A673 (cell line): ENCODE measurements at regions of chr11 and their contacts with region 1.

Region 1: GRCh38 chr11:27158722-27159679 is 118.4 kb downstream of the BBOX1 start:
- DNase-seq: peak; percentile 94
- H3K4me3 ChIP-seq: no peak overlapping the region
- H3K27ac ChIP-seq: no peak overlapping the region
- H3K4me1 ChIP-seq: no peaks in the 10 kb centered on the region
- H3K27me3 ChIP-seq: peaks cover 3% of the 10 kb centered on the region
- CTCF ChIP-seq: peak; percentile 99

Region 2: DNA sequence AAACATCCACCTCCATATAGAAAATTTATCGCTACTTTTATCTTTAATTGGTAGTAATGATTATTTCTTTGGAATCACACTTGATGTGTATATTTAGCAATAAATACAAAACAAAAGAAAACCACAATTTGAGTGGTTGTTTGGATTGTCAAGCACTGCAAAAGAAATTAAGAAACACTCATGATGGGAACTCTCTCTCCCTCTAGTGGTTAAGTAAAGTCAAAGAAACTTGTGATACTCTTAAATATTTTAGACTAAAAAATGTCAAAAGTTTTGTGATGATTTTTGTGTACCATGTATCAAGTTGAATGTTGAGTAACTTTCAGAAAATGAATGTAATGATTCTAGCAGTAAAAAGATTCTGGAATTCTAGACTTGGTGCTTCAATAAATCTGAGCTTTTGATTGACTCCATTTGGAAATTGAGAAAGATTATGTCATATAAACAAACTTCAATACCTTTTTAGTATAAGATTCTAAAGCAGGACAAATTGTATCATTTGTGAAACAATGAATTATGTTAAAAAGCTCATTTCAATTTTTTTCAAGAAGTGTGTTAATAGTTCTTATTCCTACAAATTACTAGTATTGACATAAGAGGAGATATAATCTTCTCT is 607.7 kb before region 1 on chr11:
- CTCF ChIA-PET with region 1: interaction called, 3 read pairs
- POLR2A ChIA-PET with region 1: no interaction called
- intact Hi-C with region 1: loop called (anchors 2 kb)
- DNase-seq: peak; percentile 75
- H3K4me3 ChIP-seq: no peak overlapping the region
- H3K27ac ChIP-seq: no peak overlapping the region
- H3K4me1 ChIP-seq: no peaks in the 10 kb centered on the region
- H3K27me3 ChIP-seq: peaks cover 97% of the 10 kb centered on the region
- CTCF ChIP-seq: peak; percentile 97

Region 3: DNA sequence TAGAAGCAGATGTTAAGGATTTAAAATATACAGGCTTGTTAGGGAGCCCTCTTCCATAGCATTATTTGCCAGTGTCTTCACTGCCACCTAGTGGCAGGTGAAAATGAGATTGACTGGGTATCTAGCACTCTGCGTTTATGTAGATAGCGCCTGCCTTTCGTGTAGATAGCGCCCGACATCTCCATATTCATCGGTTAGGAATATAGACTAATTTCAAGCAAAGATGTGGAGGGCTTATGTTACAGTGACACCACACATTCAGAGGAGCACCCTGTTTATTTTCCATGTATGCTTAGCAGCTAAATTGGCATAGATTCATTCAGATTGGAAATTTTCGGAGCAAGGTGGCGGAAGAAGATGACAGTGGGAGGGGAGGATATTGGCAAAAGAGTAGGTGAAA is 509.1 kb before region 1 on chr11:
- CTCF ChIA-PET with region 1: no interaction called
- POLR2A ChIA-PET with region 1: no interaction called
- intact Hi-C with region 1: loop called (anchors 2 kb)
- DNase-seq: peak; percentile 97
- H3K4me3 ChIP-seq: no peak overlapping the region
- H3K27ac ChIP-seq: no peak overlapping the region
- H3K4me1 ChIP-seq: no peaks in the 10 kb centered on the region
- H3K27me3 ChIP-seq: peaks cover 86% of the 10 kb centered on the region
- CTCF ChIP-seq: peak; percentile 100

Region 4: GRCh38 chr11:26753723-26754504 is 405.1 kb before region 1 on chr11:
- CTCF ChIA-PET with region 1: interaction called, 22 read pairs
- POLR2A ChIA-PET with region 1: no interaction called
- intact Hi-C with region 1: loop called (anchors 1 kb)
- DNase-seq: peak; percentile 89
- H3K4me3 ChIP-seq: no peak overlapping the region
- H3K27ac ChIP-seq: no peak overlapping the region
- H3K4me1 ChIP-seq: no peaks in the 10 kb centered on the region
- H3K27me3 ChIP-seq: peaks cover 74% of the 10 kb centered on the region
- CTCF ChIP-seq: peak; percentile 100

Region 5: GRCh38 chr11:26841818-26842473 is 317.1 kb before region 1 on chr11:
- CTCF ChIA-PET with region 1: no interaction called
- POLR2A ChIA-PET with region 1: no interaction called
- intact Hi-C with region 1: no loop called
- DNase-seq: no peak
- H3K4me3 ChIP-seq: no peak overlapping the region
- H3K27ac ChIP-seq: no peak overlapping the region
- H3K4me1 ChIP-seq: no peaks in the 10 kb centered on the region
- H3K27me3 ChIP-seq: peaks cover 13% of the 10 kb centered on the region
- CTCF ChIP-seq: no peak

Region 6: GRCh38 chr11:27296497-27296896 is 137.5 kb after region 1 on chr11:
- CTCF ChIA-PET with region 1: interaction called, 11 read pairs
- POLR2A ChIA-PET with region 1: no interaction called
- intact Hi-C with region 1: no loop called
- DNase-seq: peak; percentile 91
- H3K4me3 ChIP-seq: no peak overlapping the region
- H3K27ac ChIP-seq: no peak overlapping the region
- H3K4me1 ChIP-seq: peaks cover 18% of the 10 kb centered on the region
- H3K27me3 ChIP-seq: no peaks in the 10 kb centered on the region
- CTCF ChIP-seq: peak; percentile 100